A549 (cell line): ENCODE measurements at regions of chr10 and their contacts with region 1.

Region 1: DNA sequence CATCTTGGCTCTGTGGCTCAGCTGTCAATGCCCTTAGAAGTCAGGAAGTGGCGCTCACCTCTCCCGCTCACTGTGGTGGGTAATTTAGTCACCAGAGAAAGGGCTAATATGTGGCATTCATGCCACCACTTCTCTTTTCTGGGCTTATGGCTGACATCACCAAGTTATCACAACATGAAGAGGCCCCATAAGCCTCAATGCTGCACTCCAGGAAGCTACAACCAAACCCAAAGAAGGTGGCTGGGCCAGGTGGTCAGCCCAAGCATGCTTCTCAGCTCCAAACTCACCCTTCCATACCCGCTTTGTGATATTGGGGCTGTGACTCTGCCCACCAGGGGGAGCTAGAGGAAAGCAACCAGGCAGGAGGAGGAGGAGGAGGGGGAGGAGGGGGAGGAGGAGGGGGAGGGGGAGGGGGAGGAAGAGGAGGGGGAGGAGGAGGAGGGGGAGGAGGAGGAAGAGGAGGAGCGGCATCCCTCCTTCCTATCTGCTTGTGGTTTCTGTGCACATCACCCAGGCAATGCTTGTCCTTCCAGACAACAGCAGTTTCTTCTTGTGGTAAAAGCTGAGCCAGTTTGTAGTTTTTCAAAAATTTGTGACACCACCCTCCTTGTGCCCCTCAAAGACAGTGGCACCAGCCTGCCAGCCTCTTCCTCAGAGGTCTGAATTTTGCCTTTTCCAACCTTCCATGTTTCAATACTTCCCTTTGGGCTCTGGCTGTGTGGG is 42.1 kb downstream of the CYP26A1 start:
- DNase-seq: peak; percentile 39 to 65
- ATAC-seq: peak; percentile 56 to 76; a peak in 3 of 6 replicates
- H3K4me3 ChIP-seq: no peak overlapping the region
- H3K27ac ChIP-seq: 0 out of 6 replicates have a peak overlapping the region, but pooled peaks of 1 of the 2 experiments have one; percentile 29
- H3K4me1 ChIP-seq: no peaks in the 10 kb centered on the region
- CTCF ChIP-seq: no peak
- EP300 ChIP-seq: no peak
- POLR2A ChIP-seq: no peak
- RAD21 ChIP-seq: peak; percentile 39 to 54; a peak in 3 of 5 replicates

Region 2: DNA sequence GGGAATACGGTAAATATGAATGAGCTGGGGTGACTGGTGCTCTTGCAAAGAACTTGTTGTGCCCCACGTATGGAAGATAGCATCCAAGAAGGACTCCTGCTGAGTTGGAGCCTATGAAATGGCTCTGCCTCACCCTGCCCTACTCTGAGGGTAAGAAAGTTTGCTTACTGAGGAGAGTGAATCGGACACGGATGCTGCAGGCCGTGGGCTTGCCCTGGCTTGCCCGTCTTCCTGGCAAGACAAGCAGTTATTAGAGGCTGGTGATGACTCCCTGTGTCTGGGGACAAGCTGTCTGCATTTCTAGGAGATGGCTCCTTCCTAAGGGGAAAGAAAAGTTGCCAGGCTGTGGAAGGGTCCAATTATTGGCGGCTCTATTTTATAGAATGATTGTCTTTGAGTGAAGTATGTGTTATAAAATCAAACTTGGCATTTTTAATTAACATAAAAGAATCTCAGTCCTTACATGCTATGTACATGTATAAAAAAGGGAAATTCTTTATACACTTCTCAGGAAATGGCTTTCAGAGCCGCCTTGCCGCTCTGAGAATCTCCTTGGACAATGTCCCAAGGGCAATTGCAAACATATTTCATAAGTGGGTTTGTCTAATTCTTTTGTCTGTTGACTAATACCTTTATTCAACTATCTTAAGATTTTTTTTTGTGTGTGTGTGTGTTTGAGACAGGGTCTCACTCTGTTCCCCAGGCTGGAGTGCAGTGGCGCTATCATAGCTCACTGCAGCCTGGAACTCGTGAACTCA is 22.5 kb after region 1 on chr10:
- CTCF ChIA-PET with region 1: interaction called, 10 read pairs
- POLR2A ChIA-PET with region 1: no interaction called
- DNase-seq: no peak
- ATAC-seq: no peak
- H3K4me3 ChIP-seq: no peak overlapping the region
- H3K27ac ChIP-seq: no peak overlapping the region
- H3K4me1 ChIP-seq: no peaks in the 10 kb centered on the region
- CTCF ChIP-seq: no peak
- EP300 ChIP-seq: no peak
- POLR2A ChIP-seq: no peak
- RAD21 ChIP-seq: no peak

Region 3: GRCh38 chr10:93406364-93407145 is 290.7 kb after region 1 on chr10:
- CTCF ChIA-PET with region 1: no interaction called
- POLR2A ChIA-PET with region 1: no interaction called
- DNase-seq: no peak
- ATAC-seq: no peak
- H3K4me3 ChIP-seq: no peak overlapping the region
- H3K27ac ChIP-seq: no peak overlapping the region
- H3K4me1 ChIP-seq: peaks cover 14% of the 10 kb centered on the region
- CTCF ChIP-seq: no peak
- EP300 ChIP-seq: no peak
- POLR2A ChIP-seq: no peak
- RAD21 ChIP-seq: no peak